ENCODE measurements at regions of chr19 and their contacts with region 1.

Region 1: DNA sequence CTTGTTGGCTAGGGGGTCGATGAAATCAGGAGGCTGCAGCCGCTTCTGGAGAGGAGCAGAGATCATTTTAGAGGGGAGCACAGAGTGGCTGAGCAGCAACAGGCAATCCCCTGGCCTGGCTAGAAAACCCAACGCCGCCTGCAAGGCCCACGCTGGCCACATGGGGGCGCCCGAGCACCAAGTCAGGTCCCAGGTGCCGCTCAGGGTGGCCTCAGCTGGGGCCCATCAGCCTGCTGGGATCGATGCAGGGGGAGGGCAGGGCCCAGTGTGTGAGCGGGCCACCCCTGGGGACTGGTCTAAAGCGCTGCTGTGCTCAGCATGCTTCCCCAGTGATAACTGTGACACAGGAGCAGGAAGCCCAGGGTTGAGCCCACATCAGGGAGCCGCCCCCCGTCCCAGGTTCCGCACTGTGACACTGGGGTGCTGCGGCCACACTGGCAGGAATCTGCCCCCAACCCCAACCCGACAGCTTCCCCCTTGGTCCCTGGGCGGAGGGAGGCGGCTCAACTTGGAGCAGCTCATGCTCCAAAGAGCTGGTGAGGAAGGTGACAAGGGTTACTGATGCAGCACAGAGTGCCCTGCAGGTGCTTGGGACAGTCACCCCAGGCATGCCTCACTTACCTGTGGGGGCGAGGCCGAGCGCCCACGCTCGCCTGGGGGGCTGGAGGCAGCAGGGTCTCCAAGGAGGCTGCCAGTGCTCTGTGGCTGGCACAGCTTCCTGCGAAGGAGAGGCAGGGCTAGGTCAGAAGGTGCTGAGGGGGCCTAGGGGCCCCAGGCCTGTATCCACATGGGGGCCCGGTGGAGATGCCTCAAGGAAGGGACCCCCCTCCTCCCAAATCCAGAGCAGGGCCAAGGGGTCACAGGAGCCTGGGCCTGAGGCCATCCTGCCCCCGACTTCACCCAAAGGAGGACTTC is 13.3 kb upstream of the ISYNA1 start:
- DNase-seq: peak; percentile 56 to 80
- ATAC-seq: peak; percentile 73 to 83
- H3K4me3 ChIP-seq: no peak overlapping the region
- H3K27ac ChIP-seq: peak overlapping the region in 3 of 4 donors; percentile 18 to 28 (median 20)
- H3K4me1 ChIP-seq: peaks cover 6 to 16% of the 10 kb centered on the region in 2 donors
- H3K27me3 ChIP-seq: no peaks in the 10 kb centered on the region
- CTCF ChIP-seq: peak; percentile 97 to 99 (median 98)
- POLR2A ChIP-seq: no peak

Region 2: GRCh38 chr19:18058208-18059030 is 392.8 kb before region 1 on chr19:
- in situ Hi-C with region 1: no loop called
- intact Hi-C with region 1: no loop called
- DNase-seq: peak; percentile 62 to 66
- ATAC-seq: peak; percentile 81 to 87
- H3K4me3 ChIP-seq: peak overlapping the region; percentile 14 to 47 (median 36)
- H3K27ac ChIP-seq: peak overlapping the region; percentile 73 to 91 (median 90)
- H3K4me1 ChIP-seq: peaks cover 14% of the 10 kb centered on the region in 2 donors
- H3K27me3 ChIP-seq: no peaks in the 10 kb centered on the region
- CTCF ChIP-seq: peak; percentile 94 to 99 (median 98)
- POLR2A ChIP-seq: peak in 1 of 2 donors; percentile 50

Region 3: GRCh38 chr19:18428787-18429674 is 22.2 kb before region 1 on chr19:
- in situ Hi-C with region 1: no loop called
- intact Hi-C with region 1: no loop called
- DNase-seq: no peak
- ATAC-seq: no peak
- H3K4me3 ChIP-seq: peak overlapping the region in 3 of 4 donors; percentile 29 to 33 (median 32)
- H3K27ac ChIP-seq: peak overlapping the region; percentile 49 to 55 (median 51)
- H3K4me1 ChIP-seq: peaks cover 16 to 35% of the 10 kb centered on the region in 2 donors
- H3K27me3 ChIP-seq: peaks cover 0 to 8% (median 0%) of the 10 kb centered on the region in 3 donors
- CTCF ChIP-seq: no peak
- POLR2A ChIP-seq: no peak

Region 4: GRCh38 chr19:18571564-18572300 is 120.5 kb after region 1 on chr19 and contains the start of gene UBA52:
- in situ Hi-C with region 1: loop called in 3 of 4 experiments (anchors 10 to 25 kb)
- intact Hi-C with region 1: no loop called
- DNase-seq: peak; percentile 97 to 98
- ATAC-seq: peak; percentile 94 to 95
- H3K4me3 ChIP-seq: peak within 1 kb of the TSS; percentile 78 to 90 (median 82)
- H3K27ac ChIP-seq: peak within 1 kb of the TSS; percentile 88 to 98 (median 94)
- H3K4me1 ChIP-seq: peaks cover 10 to 16% of the 10 kb centered on the region in 2 donors
- H3K27me3 ChIP-seq: no peaks in the 10 kb centered on the region
- CTCF ChIP-seq: peak in 1 of 5 experiments; percentile 6
- POLR2A ChIP-seq: peak; percentile 95 to 98
- total RNA-seq, gene UBA52: 512 to 719 (median 537) TPM

Region 5: GRCh38 chr19:18683213-18683939 is 232.2 kb after region 1 on chr19 and contains the start of gene CRTC1:
- in situ Hi-C with region 1: loop called in 1 of 4 experiments (anchors 25 kb)
- intact Hi-C with region 1: no loop called
- DNase-seq: peak; percentile 76 to 87
- ATAC-seq: peak; percentile 91 to 93
- H3K4me3 ChIP-seq: peak within 1 kb of the TSS; percentile 52 to 65 (median 58)
- H3K27ac ChIP-seq: peak within 1 kb of the TSS; percentile 87 to 93 (median 90)
- H3K4me1 ChIP-seq: peaks cover 11 to 19% of the 10 kb centered on the region in 2 donors
- H3K27me3 ChIP-seq: no peaks in the 10 kb centered on the region
- CTCF ChIP-seq: no peak
- POLR2A ChIP-seq: peak; percentile 69 to 79
- total RNA-seq, gene CRTC1: 2.8 to 8.8 (median 3.7) TPM

Region 6: DNA sequence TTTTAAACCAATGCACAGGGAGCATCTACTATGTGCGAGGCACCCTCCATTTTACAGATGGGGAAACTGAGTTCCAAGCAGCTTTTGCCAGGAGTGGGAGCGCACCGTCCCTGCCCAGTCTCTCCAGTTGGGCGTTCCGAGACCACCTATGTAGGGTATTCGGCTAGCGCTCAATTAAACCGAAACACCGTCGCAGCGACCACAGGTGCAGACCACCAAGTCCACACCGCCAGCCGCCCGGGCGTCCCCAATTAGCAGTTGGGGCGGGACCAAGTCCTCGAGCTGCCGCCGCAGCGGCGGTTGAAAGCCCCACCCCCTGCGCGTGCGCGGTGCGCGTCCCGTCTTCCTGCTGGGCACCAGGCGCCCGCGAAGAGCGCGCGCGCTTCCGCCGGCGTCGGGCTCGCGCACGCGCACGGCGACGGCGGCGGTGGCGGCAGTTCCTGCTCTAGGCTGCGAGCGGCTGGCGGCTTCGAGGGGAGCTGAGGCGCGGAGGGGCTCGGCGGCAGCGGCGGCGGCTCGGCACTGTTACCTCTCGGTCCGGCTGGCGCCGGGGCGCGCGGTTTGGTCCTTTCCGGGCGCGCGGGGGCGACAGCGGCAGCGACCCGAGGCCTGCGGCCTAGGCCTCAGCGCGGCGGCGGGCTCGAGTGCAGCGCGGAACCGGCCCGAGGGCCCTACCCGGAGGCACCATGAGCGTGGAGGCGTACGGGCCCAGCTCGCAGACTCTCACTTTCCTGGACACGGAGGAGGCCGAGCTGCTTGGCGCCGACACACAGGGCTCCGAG is 380.5 kb after region 1 on chr19 and contains the start of gene UPF1:
- in situ Hi-C with region 1: loop called in 2 of 4 experiments (anchors 25 kb)
- intact Hi-C with region 1: no loop called
- DNase-seq: peak; percentile 86 to 87
- ATAC-seq: peak; percentile 91 to 95
- H3K4me3 ChIP-seq: peak within 1 kb of the TSS; percentile 78 to 96 (median 83)
- H3K27ac ChIP-seq: peak within 1 kb of the TSS; percentile 77 to 94 (median 86)
- H3K4me1 ChIP-seq: peaks cover 28 to 38% of the 10 kb centered on the region in 2 donors
- H3K27me3 ChIP-seq: peaks cover 0 to 6% (median 0%) of the 10 kb centered on the region in 3 donors
- CTCF ChIP-seq: peak in 3 of 5 experiments; percentile 20 to 49 (median 23)
- POLR2A ChIP-seq: peak; percentile 78 to 90
- total RNA-seq, gene UPF1: 26.0 to 64.9 (median 46.4) TPM

Region 7: DNA sequence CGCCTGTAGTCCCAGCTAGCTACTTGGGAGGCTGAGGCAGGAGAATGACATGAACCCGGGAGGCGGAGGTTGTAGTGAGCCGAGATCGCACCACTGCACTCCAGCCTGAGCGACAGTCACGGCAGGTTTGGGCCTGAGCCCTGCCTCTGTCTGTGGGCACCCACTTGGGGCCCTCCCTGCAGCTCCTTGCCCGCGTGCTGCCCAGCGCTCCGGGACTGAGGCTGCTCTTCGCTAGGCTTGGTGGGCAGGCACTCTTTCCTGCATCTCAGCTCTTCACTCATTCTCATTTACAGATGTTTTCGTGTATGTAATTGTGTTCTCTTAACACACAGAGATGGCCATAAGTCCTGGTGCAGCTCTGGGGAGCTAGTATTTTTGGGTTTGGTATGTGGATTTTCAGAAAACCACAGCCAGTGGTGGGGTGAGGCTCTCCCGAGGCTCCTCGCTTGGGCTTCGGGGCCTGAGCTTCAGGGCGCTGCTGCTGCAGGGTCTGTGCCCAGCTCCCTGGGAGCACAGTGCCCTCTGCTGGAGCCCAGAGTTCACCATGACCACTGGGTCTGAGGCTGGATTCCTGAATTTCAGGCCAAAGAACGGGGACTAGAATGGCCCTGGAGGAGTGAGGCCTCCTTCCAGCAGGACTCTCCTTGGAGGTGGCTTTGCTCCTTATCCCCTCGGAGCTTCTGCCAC is 395.8 kb after region 1 on chr19:
- in situ Hi-C with region 1: loop called in 3 of 4 experiments (anchors 10 to 25 kb)
- intact Hi-C with region 1: loop called (anchors 5 kb)
- DNase-seq: peak; percentile 44 to 67
- ATAC-seq: peak; percentile 59 to 77
- H3K4me3 ChIP-seq: no peak overlapping the region
- H3K27ac ChIP-seq: peak overlapping the region in 3 of 4 donors; percentile 65 to 80 (median 67)
- H3K4me1 ChIP-seq: peaks cover 49 to 53% of the 10 kb centered on the region in 2 donors
- H3K27me3 ChIP-seq: no peaks in the 10 kb centered on the region
- CTCF ChIP-seq: peak; percentile 71 to 90 (median 83)
- POLR2A ChIP-seq: no peak